Naive thymus-derived CD4-positive, alpha-beta T cell (primary cell): ENCODE measurements at regions of chr4 and their contacts with region 1.

Region 1: DNA sequence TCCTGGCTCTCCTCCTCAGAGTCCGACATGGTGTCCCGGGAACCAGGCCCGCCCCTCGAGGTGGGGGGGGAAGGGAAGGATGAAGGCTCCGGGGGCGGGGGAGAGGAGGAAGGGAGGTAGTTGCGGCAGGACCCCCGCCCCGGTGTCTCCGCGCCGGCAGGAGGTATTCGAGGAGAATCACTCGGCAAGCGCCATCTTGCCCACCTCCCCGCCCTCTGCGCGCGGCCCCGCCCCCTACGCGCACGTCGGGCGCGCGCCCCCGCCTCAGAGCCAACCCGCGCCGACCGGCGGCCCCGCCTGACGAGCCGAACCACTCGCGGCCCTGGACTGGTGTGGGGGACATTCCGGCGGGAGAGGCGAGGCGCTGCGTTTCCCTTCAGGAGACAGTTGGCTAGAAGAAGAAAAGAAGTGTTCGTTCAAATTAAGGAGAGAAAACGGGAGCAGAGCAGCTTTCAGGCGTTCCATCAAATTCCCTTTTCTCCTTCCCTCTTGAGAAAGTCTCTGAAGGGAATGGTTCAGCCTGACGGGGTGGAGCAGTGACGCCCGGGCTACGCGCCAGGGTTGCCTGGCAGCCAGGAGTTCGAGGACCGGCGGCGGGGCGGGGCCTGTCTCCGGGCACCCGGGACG is at the start of gene RAB28:
- DNase-seq: peak; percentile 92 to 97 (median 96)
- ATAC-seq: peak; percentile 95
- H3K4me3 ChIP-seq: peak within 1 kb of the TSS; percentile 81
- H3K4me3 Mint-ChIP-seq: peak within 1 kb of the TSS; percentile 79 to 98 (median 94)
- H3K27ac ChIP-seq: peak within 1 kb of the TSS; percentile 99
- H3K27ac Mint-ChIP-seq: peak within 1 kb of the TSS; percentile 87 to 100 (median 99)
- H3K4me1 ChIP-seq: peaks cover 15 to 18% of the 10 kb centered on the region in 2 donors
- H3K4me1 Mint-ChIP-seq: peaks cover 12 to 42% (median 28%) of the 10 kb centered on the region in 7 donors
- H3K27me3 ChIP-seq: no peaks in the 10 kb centered on the region
- H3K27me3 Mint-ChIP-seq: peaks cover 0 to 17% (median 7%) of the 10 kb centered on the region in 5 donors
- total RNA-seq, gene RAB28: 8.0 to 16.1 (median 14.0) TPM

Region 2: GRCh38 chr4:13452927-13453579 is 31.2 kb before region 1 on chr4:
- CTCF ChIA-PET with region 1: no interaction called
- POLR2A ChIA-PET with region 1: no interaction called
- intact Hi-C with region 1: loop called in 1 of 2 experiments (anchors 1 kb)
- DNase-seq: no peak
- ATAC-seq: no peak
- H3K4me3 ChIP-seq: no peak overlapping the region
- H3K4me3 Mint-ChIP-seq: peak overlapping the region in 7 of 10 donors; percentile 10 to 73 (median 39)
- H3K27ac ChIP-seq: no peak overlapping the region
- H3K27ac Mint-ChIP-seq: peak overlapping the region in 3 of 9 donors; percentile 12 to 89 (median 25)
- H3K4me1 ChIP-seq: no peaks in the 10 kb centered on the region
- H3K4me1 Mint-ChIP-seq: peaks cover 11 to 18% (median 16%) of the 10 kb centered on the region in 7 donors
- H3K27me3 ChIP-seq: no peaks in the 10 kb centered on the region
- H3K27me3 Mint-ChIP-seq: no peaks in the 10 kb centered on the region

Region 3: GRCh38 chr4:13627606-13628301 is 143.5 kb after region 1 on chr4 and contains the start of gene BOD1L1:
- CTCF ChIA-PET with region 1: no interaction called
- POLR2A ChIA-PET with region 1: interaction called, 3 read pairs
- intact Hi-C with region 1: loop called (anchors 1 kb)
- DNase-seq: peak; percentile 63 to 86 (median 75)
- ATAC-seq: peak; percentile 88
- H3K4me3 ChIP-seq: peak within 1 kb of the TSS; percentile 96
- H3K4me3 Mint-ChIP-seq: peak within 1 kb of the TSS; percentile 83 to 100 (median 97)
- H3K27ac ChIP-seq: peak within 1 kb of the TSS; percentile 87
- H3K27ac Mint-ChIP-seq: peak within 1 kb of the TSS; percentile 94 to 100 (median 98)
- H3K4me1 ChIP-seq: peaks cover 17 to 24% of the 10 kb centered on the region in 2 donors
- H3K4me1 Mint-ChIP-seq: peaks cover 26 to 55% (median 51%) of the 10 kb centered on the region in 7 donors
- H3K27me3 ChIP-seq: no peaks in the 10 kb centered on the region
- H3K27me3 Mint-ChIP-seq: no peaks in the 10 kb centered on the region
- total RNA-seq, gene BOD1L1: 44.5 to 76.7 (median 54.2) TPM

Region 4: GRCh38 chr4:13840502-13841190 is 356.4 kb after region 1 on chr4:
- CTCF ChIA-PET with region 1: no interaction called
- POLR2A ChIA-PET with region 1: no interaction called
- intact Hi-C with region 1: no loop called
- DNase-seq: no peak
- ATAC-seq: no peak
- H3K4me3 ChIP-seq: no peak overlapping the region
- H3K4me3 Mint-ChIP-seq: no peak overlapping the region
- H3K27ac ChIP-seq: no peak overlapping the region
- H3K27ac Mint-ChIP-seq: no peak overlapping the region
- H3K4me1 ChIP-seq: no peaks in the 10 kb centered on the region
- H3K4me1 Mint-ChIP-seq: no peaks in the 10 kb centered on the region
- H3K27me3 ChIP-seq: peaks cover 0 to 4% of the 10 kb centered on the region in 2 donors
- H3K27me3 Mint-ChIP-seq: peaks cover 0 to 10% (median 4%) of the 10 kb centered on the region in 5 donors